Colonic mucosa (tissue), 4 donors: ENCODE measurements at regions of chr2 and their contacts with region 1.

Region 1: GRCh38 chr2:48727565-48727964 is 28.0 kb downstream of the LHCGR start:
- DNase-seq: no peak
- H3K4me3 ChIP-seq: no peak overlapping the region
- H3K27ac ChIP-seq: no peak overlapping the region
- H3K4me1 ChIP-seq: no peaks in the 10 kb centered on the region
- H3K27me3 ChIP-seq: no peaks in the 10 kb centered on the region
- CTCF ChIP-seq: peak; percentile 28

Region 2: GRCh38 chr2:48452108-48452507 is 275.5 kb before region 1 on chr2:
- intact Hi-C with region 1: no loop called
- DNase-seq: no peak
- H3K4me3 ChIP-seq: no peak overlapping the region
- H3K27ac ChIP-seq: no peak overlapping the region
- H3K4me1 ChIP-seq: no peaks in the 10 kb centered on the region
- H3K27me3 ChIP-seq: no peaks in the 10 kb centered on the region
- CTCF ChIP-seq: no peak

Region 3: GRCh38 chr2:48471048-48471474 is 256.5 kb before region 1 on chr2:
- intact Hi-C with region 1: no loop called
- DNase-seq: no peak
- H3K4me3 ChIP-seq: no peak overlapping the region
- H3K27ac ChIP-seq: no peak overlapping the region
- H3K4me1 ChIP-seq: no peaks in the 10 kb centered on the region
- H3K27me3 ChIP-seq: no peaks in the 10 kb centered on the region
- CTCF ChIP-seq: peak; percentile 51

Region 4: DNA sequence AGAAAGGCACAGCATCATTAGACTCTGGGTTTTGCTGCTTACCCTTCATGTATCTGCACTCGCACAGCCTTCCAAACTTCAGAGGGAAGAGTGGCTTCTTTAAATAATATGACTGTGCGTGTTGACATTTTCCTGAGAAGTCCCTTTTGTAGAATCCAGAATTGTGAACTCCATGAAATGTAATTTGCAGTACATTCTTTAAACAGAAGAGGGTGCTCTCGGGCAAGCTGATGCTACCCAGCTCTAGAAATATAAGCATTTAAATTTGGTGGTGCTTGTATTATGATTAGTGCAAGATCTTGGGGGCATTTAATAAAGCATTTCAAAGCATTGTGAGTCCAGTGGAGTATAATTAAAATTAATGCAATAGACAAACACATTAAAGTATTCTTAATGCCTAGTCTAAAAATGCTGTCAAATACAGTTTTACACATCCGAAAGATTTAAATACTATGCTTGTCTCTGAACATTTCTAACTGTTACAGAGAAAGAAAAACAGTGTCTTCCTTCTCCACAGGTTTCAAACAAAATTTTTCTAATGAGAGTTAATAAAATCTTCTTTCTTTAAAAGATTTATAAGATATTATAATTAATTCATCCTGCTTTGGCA is 127.3 kb before region 1 on chr2:
- intact Hi-C with region 1: loop called (anchors 5 kb)
- DNase-seq: no peak
- H3K4me3 ChIP-seq: no peak overlapping the region
- H3K27ac ChIP-seq: no peak overlapping the region
- H3K4me1 ChIP-seq: no peaks in the 10 kb centered on the region
- H3K27me3 ChIP-seq: no peaks in the 10 kb centered on the region
- CTCF ChIP-seq: peak; percentile 51

Region 5: GRCh38 chr2:48984922-48985321 is 257.4 kb after region 1 on chr2:
- intact Hi-C with region 1: no loop called
- DNase-seq: no peak
- H3K4me3 ChIP-seq: no peak overlapping the region
- H3K27ac ChIP-seq: no peak overlapping the region
- H3K4me1 ChIP-seq: no peaks in the 10 kb centered on the region
- H3K27me3 ChIP-seq: no peaks in the 10 kb centered on the region
- CTCF ChIP-seq: no peak